ENCODE measurements at regions of chr3 and their contacts with region 1.

Region 1: GRCh38 chr3:112582244-112582874 is 20.5 kb downstream of the SLC35A5 start:
- DNase-seq: peak; percentile 63
- ATAC-seq: no peak
- H3K4me3 Mint-ChIP-seq: no peak overlapping the region
- H3K27ac Mint-ChIP-seq: no peak overlapping the region
- H3K4me1 Mint-ChIP-seq: peaks cover under 1% of the 10 kb centered on the region
- H3K27me3 Mint-ChIP-seq: no peaks in the 10 kb centered on the region

Region 2: GRCh38 chr3:112128843-112129727 is 453.3 kb before region 1 on chr3:
- CTCF ChIA-PET with region 1: no interaction called
- POLR2A ChIA-PET with region 1: no interaction called
- DNase-seq: peak; percentile 66
- ATAC-seq: peak; percentile 78
- H3K4me3 Mint-ChIP-seq: no peak overlapping the region
- H3K27ac Mint-ChIP-seq: peak overlapping the region; percentile 56
- H3K4me1 Mint-ChIP-seq: peaks cover 75% of the 10 kb centered on the region
- H3K27me3 Mint-ChIP-seq: no peaks in the 10 kb centered on the region

Region 3: DNA sequence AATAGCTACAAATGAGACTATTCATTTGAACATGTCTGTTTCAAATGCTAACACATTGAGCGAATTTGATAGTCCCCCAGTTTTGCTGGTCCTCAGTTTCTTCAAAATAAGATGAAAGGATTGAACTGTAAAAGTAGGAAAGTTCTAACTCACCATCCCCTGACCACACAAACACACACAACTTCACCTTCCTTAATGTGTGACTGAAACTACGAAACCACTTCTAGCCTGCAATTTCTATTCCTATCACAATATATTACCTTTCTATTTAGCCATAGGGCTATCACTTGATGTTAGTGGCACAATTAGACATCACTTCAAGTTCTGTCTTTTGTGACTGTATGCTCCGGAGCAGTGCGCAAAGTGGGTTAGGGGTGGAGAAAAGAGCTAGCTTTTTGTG is 98.0 kb before region 1 on chr3:
- CTCF ChIA-PET with region 1: no interaction called
- POLR2A ChIA-PET with region 1: no interaction called
- DNase-seq: no peak
- ATAC-seq: no peak
- H3K4me3 Mint-ChIP-seq: no peak overlapping the region
- H3K27ac Mint-ChIP-seq: peak overlapping the region; percentile 4
- H3K4me1 Mint-ChIP-seq: peaks cover 50% of the 10 kb centered on the region
- H3K27me3 Mint-ChIP-seq: no peaks in the 10 kb centered on the region

Region 4: DNA sequence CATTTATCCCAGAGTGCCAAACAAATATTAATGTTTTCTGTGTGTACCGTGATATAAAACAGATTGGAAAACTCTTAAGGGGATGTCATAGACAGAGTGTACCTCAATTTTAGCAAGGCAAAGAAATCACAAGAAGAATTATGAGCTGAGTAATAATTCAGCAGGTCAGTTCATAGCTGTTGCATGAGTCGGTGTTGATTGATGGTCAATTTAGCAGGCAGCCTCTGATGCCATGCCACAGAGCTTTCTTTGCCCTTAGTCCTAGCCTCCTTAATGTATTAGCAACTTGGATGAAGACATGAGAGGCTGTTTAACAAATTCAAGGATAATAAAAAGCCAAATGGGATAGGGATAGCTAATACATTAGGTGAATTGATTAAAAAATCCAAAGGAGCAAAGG is 13.7 kb before region 1 on chr3:
- CTCF ChIA-PET with region 1: interaction called, 24 read pairs
- POLR2A ChIA-PET with region 1: no interaction called
- DNase-seq: no peak
- ATAC-seq: no peak
- H3K4me3 Mint-ChIP-seq: no peak overlapping the region
- H3K27ac Mint-ChIP-seq: no peak overlapping the region
- H3K4me1 Mint-ChIP-seq: peaks cover 4% of the 10 kb centered on the region
- H3K27me3 Mint-ChIP-seq: no peaks in the 10 kb centered on the region

Region 5: GRCh38 chr3:112593258-112593657 is 10.9 kb after region 1 on chr3:
- CTCF ChIA-PET with region 1: interaction called, 23 read pairs
- POLR2A ChIA-PET with region 1: no interaction called
- DNase-seq: no peak
- ATAC-seq: no peak
- H3K4me3 Mint-ChIP-seq: no peak overlapping the region
- H3K27ac Mint-ChIP-seq: no peak overlapping the region
- H3K4me1 Mint-ChIP-seq: peaks cover 4% of the 10 kb centered on the region
- H3K27me3 Mint-ChIP-seq: no peaks in the 10 kb centered on the region

Region 6: GRCh38 chr3:112598731-112599130 is 16.4 kb after region 1 on chr3:
- CTCF ChIA-PET with region 1: interaction called, 23 read pairs
- POLR2A ChIA-PET with region 1: no interaction called
- DNase-seq: no peak
- ATAC-seq: no peak
- H3K4me3 Mint-ChIP-seq: no peak overlapping the region
- H3K27ac Mint-ChIP-seq: no peak overlapping the region
- H3K4me1 Mint-ChIP-seq: peaks cover 9% of the 10 kb centered on the region
- H3K27me3 Mint-ChIP-seq: no peaks in the 10 kb centered on the region

Region 7: DNA sequence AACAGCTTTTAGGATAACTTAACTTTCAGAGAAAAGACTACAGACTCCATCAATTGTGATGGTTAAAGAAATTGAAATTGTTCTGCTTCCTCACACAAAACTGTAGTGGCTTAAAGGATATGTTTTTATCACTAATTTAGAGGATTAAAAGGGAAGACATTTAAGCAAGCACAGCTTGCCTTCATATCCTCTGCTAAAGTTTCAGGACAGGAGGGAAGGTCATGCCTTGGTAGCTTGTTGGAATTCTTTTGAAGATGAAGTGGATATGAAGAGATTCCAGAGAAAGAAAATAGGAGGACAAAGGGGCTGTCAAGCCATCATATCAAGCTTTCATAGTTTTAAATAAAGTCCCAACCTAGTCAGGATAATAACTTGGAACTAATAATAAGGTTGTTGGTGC is 25.5 kb after region 1 on chr3:
- CTCF ChIA-PET with region 1: interaction called, 11 read pairs
- POLR2A ChIA-PET with region 1: no interaction called
- DNase-seq: no peak
- ATAC-seq: no peak
- H3K4me3 Mint-ChIP-seq: no peak overlapping the region
- H3K27ac Mint-ChIP-seq: no peak overlapping the region
- H3K4me1 Mint-ChIP-seq: peaks cover 12% of the 10 kb centered on the region
- H3K27me3 Mint-ChIP-seq: peaks cover 16% of the 10 kb centered on the region

Region 8: GRCh38 chr3:112635671-112636070 is 53.3 kb after region 1 on chr3:
- CTCF ChIA-PET with region 1: interaction called, 24 read pairs
- POLR2A ChIA-PET with region 1: no interaction called
- DNase-seq: no peak
- ATAC-seq: no peak
- H3K4me3 Mint-ChIP-seq: no peak overlapping the region
- H3K27ac Mint-ChIP-seq: no peak overlapping the region
- H3K4me1 Mint-ChIP-seq: no peaks in the 10 kb centered on the region
- H3K27me3 Mint-ChIP-seq: peaks cover 7% of the 10 kb centered on the region

Region 9: GRCh38 chr3:112973325-112974177 is 391.2 kb after region 1 on chr3:
- CTCF ChIA-PET with region 1: interaction called, 10 read pairs
- POLR2A ChIA-PET with region 1: no interaction called
- DNase-seq: peak; percentile 60
- ATAC-seq: peak; percentile 89
- H3K4me3 Mint-ChIP-seq: peak overlapping the region; percentile 79
- H3K27ac Mint-ChIP-seq: peak overlapping the region; percentile 84
- H3K4me1 Mint-ChIP-seq: peaks cover 53% of the 10 kb centered on the region
- H3K27me3 Mint-ChIP-seq: no peaks in the 10 kb centered on the region